ENCODE measurements at regions of chr1 and their contacts with region 1.

Region 1: DNA sequence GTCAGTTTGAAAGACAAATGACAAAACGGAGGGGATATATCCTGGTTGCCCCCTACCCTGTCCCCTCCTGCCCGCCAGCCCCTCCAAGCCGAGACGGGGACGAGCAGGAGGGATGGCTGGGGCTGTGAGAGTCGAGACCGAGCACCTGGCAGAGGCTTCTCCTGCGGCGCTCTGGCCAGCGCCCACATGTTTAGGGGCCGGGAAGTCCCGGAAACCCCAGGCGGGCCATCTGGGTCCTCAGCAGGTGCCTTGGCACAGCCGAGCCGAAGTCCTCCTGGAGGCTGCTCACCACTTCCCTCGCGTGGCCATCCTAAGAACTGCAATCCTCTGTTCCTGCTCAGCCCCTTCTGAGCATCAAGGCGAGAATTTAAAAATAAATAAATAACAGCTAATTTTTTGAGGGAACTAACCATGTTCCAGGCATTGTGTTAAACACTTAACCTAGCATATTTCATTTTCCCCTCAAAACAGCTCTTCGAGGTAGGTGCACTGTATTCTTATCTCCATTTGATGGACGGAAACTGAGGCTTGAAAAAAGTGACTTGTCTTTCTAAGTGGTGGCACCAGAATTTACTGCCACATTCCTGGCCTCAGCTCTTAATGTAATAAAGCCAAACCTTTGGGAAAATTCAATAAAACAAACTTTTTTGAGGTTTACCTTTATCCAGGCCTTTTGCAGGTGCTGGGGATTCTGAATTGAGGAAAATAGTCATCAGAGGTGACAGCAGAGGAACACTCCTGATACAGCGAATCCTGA is 3.5 kb upstream of the RIMS3 start:
- DNase-seq: peak in 1 of 2 donors; percentile 85
- H3K4me3 ChIP-seq: peak overlapping the region in 1 of 2 donors; percentile 45
- H3K27ac ChIP-seq: no peak overlapping the region
- H3K4me1 ChIP-seq: peaks cover 0 to 11% of the 10 kb centered on the region in 2 donors
- H3K27me3 ChIP-seq: no peaks in the 10 kb centered on the region
- CTCF ChIP-seq: peak; percentile 78 to 98 (median 96)

Region 2: GRCh38 chr1:40531381-40532061 is 137.4 kb before region 1 on chr1 and contains the start of gene ZNF684:
- intact Hi-C with region 1: loop called (anchors 5 kb)
- DNase-seq: peak; percentile 63 to 94
- H3K4me3 ChIP-seq: peak within 1 kb of the TSS; percentile 59 to 77
- H3K27ac ChIP-seq: peak within 1 kb of the TSS; percentile 77 to 81
- H3K4me1 ChIP-seq: peaks cover 0 to 8% of the 10 kb centered on the region in 2 donors
- H3K27me3 ChIP-seq: no peaks in the 10 kb centered on the region
- CTCF ChIP-seq: no peak
- total RNA-seq, gene ZNF684: 0.85 TPM

Region 3: DNA sequence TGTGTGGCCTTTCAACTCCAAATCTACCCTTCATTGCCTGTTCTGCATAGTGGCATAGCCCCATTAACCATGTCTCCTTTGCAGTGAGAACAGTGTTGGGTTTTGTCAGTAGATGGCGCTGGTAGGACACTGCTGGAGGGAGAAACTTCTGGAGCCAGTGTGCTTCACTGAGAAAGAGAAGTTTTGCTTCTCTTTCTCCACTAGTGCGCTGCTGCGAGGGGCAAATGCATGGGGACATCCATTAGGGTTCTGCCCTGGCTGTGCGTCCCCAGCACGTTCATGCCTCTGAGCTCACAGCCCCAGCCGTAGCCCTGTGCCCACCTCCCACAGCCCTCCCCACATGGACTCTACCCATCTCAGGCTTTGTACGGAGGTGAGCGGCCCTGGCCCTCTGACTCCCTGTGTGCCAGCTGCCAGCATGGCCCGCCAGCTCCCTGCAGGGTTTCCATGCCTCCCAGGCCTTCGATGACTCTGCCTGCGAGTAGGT is 56.6 kb before region 1 on chr1:
- intact Hi-C with region 1: loop called (anchors 1 kb)
- DNase-seq: peak in 1 of 2 donors; percentile 82
- H3K4me3 ChIP-seq: no peak overlapping the region
- H3K27ac ChIP-seq: no peak overlapping the region
- H3K4me1 ChIP-seq: peaks cover 0 to 2% of the 10 kb centered on the region in 2 donors
- H3K27me3 ChIP-seq: no peaks in the 10 kb centered on the region
- CTCF ChIP-seq: peak; percentile 75 to 93 (median 82)

Region 4: GRCh38 chr1:40774266-40774998 is 105.5 kb after region 1 on chr1:
- intact Hi-C with region 1: no loop called
- DNase-seq: no peak
- H3K4me3 ChIP-seq: no peak overlapping the region
- H3K27ac ChIP-seq: peak overlapping the region in 1 of 2 donors; percentile 46
- H3K4me1 ChIP-seq: no peaks in the 10 kb centered on the region
- H3K27me3 ChIP-seq: no peaks in the 10 kb centered on the region
- CTCF ChIP-seq: peak; percentile 59 to 79 (median 60)